ENCODE measurements at regions of chr16 and their contacts with region 1.

Region 1: DNA sequence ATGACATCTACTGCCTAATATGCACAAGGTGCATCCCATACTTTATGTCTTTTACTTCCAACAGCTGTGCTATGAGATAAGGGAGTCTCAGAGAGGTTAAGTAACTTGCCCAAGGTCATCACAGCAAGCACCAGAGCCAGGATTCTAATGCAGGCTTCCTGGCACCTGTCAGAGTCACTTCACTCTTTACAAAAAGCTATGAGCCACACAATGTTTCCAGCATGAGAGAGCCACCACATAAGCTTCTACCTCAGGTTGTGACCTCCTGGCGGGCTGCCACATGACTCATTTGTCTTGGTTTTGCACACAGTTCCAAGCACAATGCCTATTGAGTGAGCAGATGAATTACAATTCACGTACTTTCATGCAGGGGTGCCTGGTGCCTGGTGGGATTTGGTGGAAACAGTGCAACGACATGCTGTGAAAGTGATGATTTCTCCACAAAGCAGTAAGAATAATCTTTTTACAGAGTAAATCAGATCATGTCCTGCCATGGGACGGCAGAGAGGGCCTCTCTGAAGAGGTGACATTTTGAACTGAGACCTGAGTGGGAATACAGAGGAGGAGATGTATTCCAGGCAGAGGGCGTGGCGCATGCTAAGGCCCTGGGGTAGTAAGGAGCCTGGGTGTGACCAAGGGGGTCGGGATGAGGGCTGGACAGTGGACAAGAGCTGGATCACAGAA is 53.2 kb downstream of the CACNG3 start:
- DNase-seq: peak; percentile 97
- H3K4me3 ChIP-seq: no peak overlapping the region
- H3K27ac ChIP-seq: peak overlapping the region; percentile 98
- H3K4me1 ChIP-seq: peaks cover 41% of the 10 kb centered on the region
- H3K27me3 ChIP-seq: no peaks in the 10 kb centered on the region
- CTCF ChIP-seq: no peak

Region 2: GRCh38 chr16:24041826-24042631 is 267.3 kb before region 1 on chr16:
- CTCF ChIA-PET with region 1: no interaction called
- POLR2A ChIA-PET with region 1: no interaction called
- intact Hi-C with region 1: loop called (anchors 5 kb)
- DNase-seq: peak; percentile 87
- H3K4me3 ChIP-seq: no peak overlapping the region
- H3K27ac ChIP-seq: no peak overlapping the region
- H3K4me1 ChIP-seq: peaks cover 23% of the 10 kb centered on the region
- H3K27me3 ChIP-seq: no peaks in the 10 kb centered on the region
- CTCF ChIP-seq: peak; percentile 86

Region 3: DNA sequence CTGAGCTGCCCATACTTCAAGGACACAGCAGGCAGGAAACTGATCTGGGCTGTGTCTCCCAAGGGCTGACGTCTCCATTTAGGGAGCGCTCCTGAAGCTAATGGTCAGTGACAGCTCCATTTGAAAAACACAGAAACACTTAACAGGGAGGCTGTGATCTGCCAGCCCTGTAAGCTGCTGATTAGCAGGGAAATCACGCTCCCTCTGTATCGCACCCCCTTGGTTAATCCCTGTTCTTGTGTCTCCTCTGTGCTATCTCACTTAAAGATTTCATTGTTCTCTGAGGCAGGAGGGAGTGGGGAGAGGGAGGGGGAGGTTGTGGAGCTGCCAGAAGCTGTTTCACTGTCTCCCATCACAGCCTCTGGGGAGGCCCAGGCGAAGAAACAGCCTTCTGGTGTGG is 100.7 kb before region 1 on chr16:
- CTCF ChIA-PET with region 1: no interaction called
- POLR2A ChIA-PET with region 1: no interaction called
- intact Hi-C with region 1: no loop called
- DNase-seq: peak; percentile 84
- H3K4me3 ChIP-seq: no peak overlapping the region
- H3K27ac ChIP-seq: peak overlapping the region; percentile 43
- H3K4me1 ChIP-seq: peaks cover 21% of the 10 kb centered on the region
- H3K27me3 ChIP-seq: no peaks in the 10 kb centered on the region
- CTCF ChIP-seq: no peak

Region 4: GRCh38 chr16:24279982-24280381 is 29.4 kb before region 1 on chr16:
- CTCF ChIA-PET with region 1: no interaction called
- POLR2A ChIA-PET with region 1: interaction called, 22 read pairs
- intact Hi-C with region 1: no loop called
- DNase-seq: no peak
- H3K4me3 ChIP-seq: no peak overlapping the region
- H3K27ac ChIP-seq: no peak overlapping the region
- H3K4me1 ChIP-seq: peaks cover 11% of the 10 kb centered on the region
- H3K27me3 ChIP-seq: no peaks in the 10 kb centered on the region
- CTCF ChIP-seq: no peak

Region 5: GRCh38 chr16:24493859-24494258 is 184.5 kb after region 1 on chr16:
- CTCF ChIA-PET with region 1: interaction called, 3 read pairs
- POLR2A ChIA-PET with region 1: interaction called, 12 read pairs
- intact Hi-C with region 1: loop called (anchors 1 kb)
- DNase-seq: peak; percentile 54
- H3K4me3 ChIP-seq: no peak overlapping the region
- H3K27ac ChIP-seq: no peak overlapping the region
- H3K4me1 ChIP-seq: peaks cover 31% of the 10 kb centered on the region
- H3K27me3 ChIP-seq: no peaks in the 10 kb centered on the region
- CTCF ChIP-seq: no peak

Region 6: GRCh38 chr16:24499193-24499814 is 189.9 kb after region 1 on chr16:
- CTCF ChIA-PET with region 1: interaction called, 12 read pairs
- POLR2A ChIA-PET with region 1: interaction called, 12 read pairs
- intact Hi-C with region 1: loop called (anchors 1 kb)
- DNase-seq: peak; percentile 95
- H3K4me3 ChIP-seq: no peak overlapping the region
- H3K27ac ChIP-seq: peak overlapping the region; percentile 85
- H3K4me1 ChIP-seq: peaks cover 54% of the 10 kb centered on the region
- H3K27me3 ChIP-seq: no peaks in the 10 kb centered on the region
- CTCF ChIP-seq: peak; percentile 92

Region 7: DNA sequence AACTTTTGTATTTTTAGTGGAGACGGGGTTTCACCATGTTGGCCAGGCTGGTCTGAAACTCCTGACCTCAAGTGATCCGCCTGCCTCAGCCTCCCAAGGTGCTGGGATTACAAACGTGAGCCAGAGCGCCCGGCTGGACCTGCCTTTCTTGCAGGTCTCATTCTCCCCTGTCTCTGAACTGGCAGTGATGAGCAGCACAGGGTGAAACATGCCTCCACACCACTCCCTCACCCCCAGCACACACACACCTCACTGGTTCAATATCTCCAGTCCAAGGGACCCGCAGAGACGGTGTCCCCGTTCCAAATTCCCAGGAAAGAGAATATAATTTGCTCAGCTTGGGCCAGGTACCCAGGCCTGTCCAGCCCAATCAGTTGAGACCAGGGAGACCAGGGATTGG is 559.7 kb after region 1 on chr16:
- CTCF ChIA-PET with region 1: no interaction called
- POLR2A ChIA-PET with region 1: no interaction called
- intact Hi-C with region 1: no loop called
- DNase-seq: no peak
- H3K4me3 ChIP-seq: no peak overlapping the region
- H3K27ac ChIP-seq: no peak overlapping the region
- H3K4me1 ChIP-seq: no peaks in the 10 kb centered on the region
- H3K27me3 ChIP-seq: no peaks in the 10 kb centered on the region
- CTCF ChIP-seq: no peak